PC-3 (cell line): ENCODE measurements at regions of chr9 and their contacts with region 1.

Region 1: GRCh38 chr9:83219152-83219923 is 156.4 kb upstream of the RASEF start:
- DNase-seq: peak; percentile 59
- ATAC-seq: peak; percentile 90
- H3K4me3 ChIP-seq: peak overlapping the region; percentile 78
- H3K27ac ChIP-seq: no peak overlapping the region
- H3K4me1 ChIP-seq: peaks cover 12% of the 10 kb centered on the region; the same call in 1 of the 2 replicates
- H3K27me3 ChIP-seq: no peaks in the 10 kb centered on the region
- CTCF ChIP-seq: peak; percentile 34; the same call in 1 of the 2 replicates

Region 2: DNA sequence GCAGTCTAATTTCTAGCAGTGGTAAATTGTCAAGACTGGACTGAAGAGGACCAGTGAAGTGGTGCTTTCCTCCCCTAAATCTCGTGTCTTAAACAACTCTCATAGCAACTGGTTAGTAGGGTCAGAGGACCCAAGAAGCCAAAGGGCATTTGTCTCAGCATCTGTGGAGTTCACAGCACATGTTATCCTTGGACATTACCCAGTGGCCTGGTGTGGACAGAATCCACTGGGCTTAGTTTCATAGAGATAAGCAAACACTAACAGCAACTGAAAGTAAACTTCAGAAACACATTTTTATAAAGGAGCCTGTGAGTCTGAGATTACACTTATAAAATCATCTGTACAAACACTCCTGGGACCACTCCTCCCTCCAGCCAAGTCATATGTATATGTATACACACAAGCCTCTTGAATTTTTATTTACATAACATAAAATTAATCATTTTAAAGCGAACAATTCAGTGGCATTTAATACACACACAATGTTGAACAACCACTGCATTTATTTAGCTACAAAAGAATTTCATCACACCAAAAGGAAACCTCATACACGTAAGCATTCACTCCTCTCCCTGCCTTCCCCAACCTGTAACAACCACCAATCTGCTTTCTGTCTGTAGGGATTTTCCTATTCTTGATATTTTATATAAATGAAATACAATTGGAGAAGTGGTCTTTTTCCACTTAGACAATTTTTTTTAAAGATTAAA is 614.2 kb before region 1 on chr9:
- CTCF ChIA-PET with region 1: no interaction called
- POLR2A ChIA-PET with region 1: no interaction called
- intact Hi-C with region 1: no loop called
- DNase-seq: no peak
- ATAC-seq: no peak
- H3K4me3 ChIP-seq: no peak overlapping the region
- H3K27ac ChIP-seq: no peak overlapping the region
- H3K4me1 ChIP-seq: peaks cover 3% of the 10 kb centered on the region; the same call in 1 of the 2 replicates
- H3K27me3 ChIP-seq: no peaks in the 10 kb centered on the region
- CTCF ChIP-seq: no peak

Region 3: DNA sequence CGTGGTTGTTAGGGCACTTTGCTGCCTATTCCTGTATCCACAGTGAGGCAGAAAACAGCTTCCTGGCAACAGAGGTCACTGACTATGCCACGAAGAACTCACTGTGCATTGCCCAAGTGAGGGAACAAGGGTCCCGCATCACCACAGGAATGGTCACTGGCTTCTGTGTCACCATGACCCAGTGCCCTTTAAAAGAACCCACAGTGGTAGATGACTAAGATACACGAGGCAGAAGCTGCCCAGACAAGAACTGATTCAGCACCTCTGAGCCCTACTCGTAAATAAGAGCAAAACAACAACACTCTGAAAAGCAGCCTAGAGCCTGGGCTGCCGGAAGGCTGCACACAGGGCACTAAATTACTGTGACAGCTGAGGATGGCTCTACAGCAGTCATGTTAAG is 80.2 kb after region 1 on chr9:
- CTCF ChIA-PET with region 1: no interaction called
- POLR2A ChIA-PET with region 1: interaction called, 3 read pairs
- intact Hi-C with region 1: loop called (anchors 1 kb)
- DNase-seq: peak; percentile 79
- ATAC-seq: peak; percentile 88
- H3K4me3 ChIP-seq: peak overlapping the region; percentile 61
- H3K27ac ChIP-seq: peak overlapping the region; percentile 89
- H3K4me1 ChIP-seq: peaks cover 20% of the 10 kb centered on the region
- H3K27me3 ChIP-seq: no peaks in the 10 kb centered on the region
- CTCF ChIP-seq: no peak

Region 4: DNA sequence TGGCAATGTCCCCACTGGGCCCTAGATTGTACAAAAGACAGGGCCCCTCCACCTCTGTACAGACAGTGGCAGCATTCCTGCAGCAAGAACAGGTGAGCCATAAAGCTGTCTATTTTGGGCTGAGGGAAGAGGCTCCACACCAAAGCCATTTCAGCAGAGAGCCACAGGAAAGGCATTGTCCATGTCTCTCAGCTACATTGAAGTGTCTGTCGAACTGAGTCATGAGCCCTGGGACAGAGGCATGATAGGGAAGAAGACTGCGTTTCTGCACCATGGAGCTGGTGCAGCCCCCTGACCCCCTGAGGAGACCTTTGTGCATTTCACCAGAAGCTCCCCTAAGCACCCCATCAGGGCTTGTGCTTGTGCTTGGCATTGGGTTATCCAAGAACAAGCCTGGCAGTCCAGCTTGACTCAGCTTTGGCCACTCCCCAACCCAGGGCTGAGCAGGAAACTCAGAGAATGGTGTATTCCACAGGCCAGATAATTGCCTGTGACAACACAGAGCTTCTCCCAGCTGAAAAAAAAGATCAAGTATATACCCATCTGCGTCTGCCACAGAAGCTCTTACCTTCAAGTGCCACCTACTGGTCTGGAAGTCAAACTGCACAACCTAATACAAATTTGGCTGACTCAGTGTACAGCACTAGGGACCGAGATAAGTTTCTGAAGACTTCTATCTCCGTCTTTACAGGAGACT is 324.8 kb after region 1 on chr9:
- CTCF ChIA-PET with region 1: interaction called, 4 read pairs
- POLR2A ChIA-PET with region 1: no interaction called
- intact Hi-C with region 1: loop called (anchors 1 kb)
- DNase-seq: peak; percentile 75
- ATAC-seq: peak; percentile 97
- H3K4me3 ChIP-seq: no peak overlapping the region
- H3K27ac ChIP-seq: no peak overlapping the region
- H3K4me1 ChIP-seq: no peaks in the 10 kb centered on the region
- H3K27me3 ChIP-seq: no peaks in the 10 kb centered on the region
- CTCF ChIP-seq: peak; percentile 74